ENCODE measurements at regions of chr1 and their contacts with region 1.

Region 1: DNA sequence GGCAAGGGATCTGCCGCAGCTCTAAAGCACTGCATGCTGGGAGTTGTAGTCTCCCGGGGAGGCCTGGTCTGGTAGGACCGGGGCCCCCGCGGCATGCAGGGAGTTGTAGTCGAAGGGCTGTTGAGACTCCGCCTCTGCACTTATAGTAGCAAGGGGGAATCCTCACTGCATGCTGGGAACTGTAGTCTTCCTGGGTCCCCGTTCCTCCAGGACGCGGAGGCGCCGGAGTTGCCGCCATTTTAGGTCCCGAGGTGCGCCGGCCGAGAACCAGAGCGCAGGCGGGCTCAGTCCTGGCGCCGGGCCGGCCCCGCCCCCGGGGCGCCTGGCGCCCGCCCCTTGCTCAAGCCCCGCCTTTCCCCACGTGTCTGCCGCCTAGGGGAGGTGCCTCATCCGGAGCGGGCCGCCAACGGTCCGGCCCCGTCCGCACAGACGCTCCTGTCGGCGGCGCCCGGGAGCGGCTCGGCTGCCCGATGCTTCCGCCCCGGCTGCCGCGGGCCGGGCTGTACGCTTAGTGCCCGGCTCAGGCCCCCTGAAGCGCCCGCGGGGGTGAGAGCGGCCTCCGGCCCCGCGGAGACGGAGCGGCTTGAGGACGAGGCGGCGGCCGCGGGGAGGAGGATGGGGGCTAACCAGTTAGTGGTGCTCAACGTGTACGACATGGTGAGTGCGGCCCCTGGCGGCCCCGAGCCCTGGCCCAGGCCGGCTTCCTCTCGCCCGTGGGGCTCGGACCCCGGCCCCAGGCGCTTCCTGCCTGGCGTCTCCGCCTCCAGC is at the start of gene DESI2:
- DNase-seq: peak; percentile 100
- H3K4me3 ChIP-seq: peak within 1 kb of the TSS; percentile 54 to 87 (median 72)
- H3K27ac ChIP-seq: peak within 1 kb of the TSS; percentile 74 to 98 (median 96)
- H3K4me1 ChIP-seq: peaks cover 15 to 55% (median 37%) of the 10 kb centered on the region in 6 donors
- H3K27me3 ChIP-seq: no peaks in the 10 kb centered on the region
- CTCF ChIP-seq: peak in 10 of 11 experiments; percentile 20 to 77 (median 54)
- POLR2A ChIP-seq: peak; percentile 79 to 93 (median 91)
- total RNA-seq, gene DESI2: 18.6 to 30.3 (median 20.1) TPM

Region 2: DNA sequence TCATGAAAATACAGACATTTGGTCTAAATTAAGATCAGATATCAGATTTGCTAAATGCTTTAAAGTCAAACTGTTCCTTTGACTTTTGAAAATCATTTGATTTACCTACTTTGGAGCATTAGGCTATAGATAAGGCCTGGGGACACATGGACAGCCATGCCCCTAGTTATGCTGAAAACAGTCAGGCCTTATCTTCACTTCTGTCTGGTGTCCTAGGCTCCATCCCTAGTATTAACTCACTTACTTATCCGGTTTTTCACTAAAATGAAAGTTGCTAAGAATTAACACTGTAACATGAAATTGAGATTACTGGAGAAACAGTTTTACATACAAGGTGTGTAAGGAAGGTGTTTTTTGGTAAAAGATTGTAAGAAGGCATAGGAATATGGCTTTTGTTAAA is 196.3 kb before region 1 on chr1:
- intact Hi-C with region 1: loop called (anchors 5 kb)
- DNase-seq: no peak
- H3K4me3 ChIP-seq: no peak overlapping the region
- H3K27ac ChIP-seq: no peak overlapping the region
- H3K4me1 ChIP-seq: peaks cover 10 to 22% (median 17%) of the 10 kb centered on the region in 6 donors
- H3K27me3 ChIP-seq: no peaks in the 10 kb centered on the region
- CTCF ChIP-seq: no peak
- POLR2A ChIP-seq: no peak